B cell (primary cell): ENCODE measurements at regions of chr1 and their contacts with region 1.

Region 1: DNA sequence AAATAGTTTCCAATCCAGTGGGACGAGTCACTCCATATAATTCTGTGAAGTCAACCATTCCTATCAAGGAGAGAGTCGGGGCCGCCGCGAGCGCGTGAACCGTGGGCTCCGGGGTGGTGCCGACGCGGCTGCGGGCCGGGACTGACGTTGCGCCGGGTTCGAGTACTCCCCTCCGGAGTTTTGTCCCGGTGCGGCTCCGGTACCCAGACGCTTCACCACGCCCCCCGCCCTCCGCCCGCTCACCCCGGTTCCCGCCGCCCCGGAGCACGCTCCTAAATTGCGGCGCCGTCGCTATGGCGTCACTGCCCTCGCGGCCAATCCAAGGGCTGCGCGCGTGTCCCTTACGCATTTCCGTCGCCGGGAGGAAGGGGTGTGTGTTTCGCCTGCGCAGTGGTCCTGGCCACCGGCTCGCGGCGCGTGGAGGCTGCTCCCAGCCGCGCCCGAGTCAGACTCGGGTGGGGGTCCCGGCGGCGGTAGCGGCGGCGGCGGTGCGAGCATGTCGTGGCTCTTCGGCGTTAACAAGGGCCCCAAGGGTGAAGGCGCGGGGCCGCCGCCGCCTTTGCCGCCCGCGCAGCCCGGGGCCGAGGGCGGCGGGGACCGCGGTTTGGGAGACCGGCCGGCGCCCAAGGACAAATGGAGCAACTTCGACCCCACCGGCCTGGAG is at the start of gene ATAD3B:
- DNase-seq: peak; percentile 92
- ATAC-seq: peak; percentile 96
- H3K4me3 ChIP-seq: peak within 1 kb of the TSS; percentile 74 to 89 (median 84)
- H3K4me3 Mint-ChIP-seq: peak within 1 kb of the TSS; percentile 87
- H3K27ac ChIP-seq: peak within 1 kb of the TSS; percentile 63 to 73
- H3K27ac Mint-ChIP-seq: peak within 1 kb of the TSS; percentile 84
- H3K4me1 ChIP-seq: peaks cover 13% of the 10 kb centered on the region in 2 donors
- H3K4me1 Mint-ChIP-seq: peaks cover 23% of the 10 kb centered on the region
- H3K27me3 ChIP-seq: no peaks in the 10 kb centered on the region
- H3K27me3 Mint-ChIP-seq: no peaks in the 10 kb centered on the region
- CTCF ChIP-seq: no peak
- total RNA-seq, gene ATAD3B: 51.4 and 51.5 TPM in 2 replicates

Region 2: DNA sequence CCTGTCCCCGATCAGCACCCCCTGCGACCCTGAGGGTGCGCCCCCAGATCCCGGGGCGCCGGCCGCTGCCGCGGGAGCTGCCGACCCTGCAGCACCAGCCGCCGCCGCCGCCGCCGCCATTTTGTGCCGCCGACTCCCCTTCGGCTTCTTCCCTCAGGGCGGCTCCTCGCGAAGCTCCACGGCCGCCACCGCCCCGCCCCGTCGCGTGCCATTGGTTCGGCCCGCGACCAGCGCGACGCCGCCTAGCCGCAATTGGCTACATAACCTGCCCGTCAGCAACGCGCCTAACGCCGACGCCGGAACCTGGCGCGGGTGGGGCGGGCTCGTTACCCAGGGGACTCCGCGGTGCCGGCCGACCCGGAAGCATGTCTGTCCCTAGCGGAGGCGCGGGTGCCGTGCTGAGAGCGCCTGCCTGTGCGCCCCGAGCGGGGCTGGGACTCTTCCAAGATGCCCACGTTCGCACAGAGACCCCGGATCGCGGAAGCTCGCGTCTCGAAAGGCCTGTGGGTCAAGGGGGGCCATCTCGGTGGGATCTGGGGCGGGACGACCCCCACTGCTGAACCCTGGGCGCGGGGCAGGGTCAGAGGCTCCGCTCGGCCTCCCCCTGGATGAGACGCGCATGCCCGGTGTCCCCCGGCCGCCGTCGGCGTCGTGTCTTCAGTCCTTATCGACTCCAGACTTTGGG is 72.2 kb before region 1 on chr1 and contains the start of gene CCNL2:
- CTCF ChIA-PET with region 1: no interaction called
- POLR2A ChIA-PET with region 1: no interaction called
- intact Hi-C with region 1: loop called (anchors 2 kb)
- DNase-seq: peak; percentile 99
- ATAC-seq: peak; percentile 96
- H3K4me3 ChIP-seq: peak within 1 kb of the TSS; percentile 79 to 96 (median 92)
- H3K4me3 Mint-ChIP-seq: peak within 1 kb of the TSS; percentile 94
- H3K27ac ChIP-seq: peak within 1 kb of the TSS; percentile 70 to 85
- H3K27ac Mint-ChIP-seq: peak within 1 kb of the TSS; percentile 91
- H3K4me1 ChIP-seq: peaks cover 23 to 29% of the 10 kb centered on the region in 2 donors
- H3K4me1 Mint-ChIP-seq: peaks cover 49% of the 10 kb centered on the region
- H3K27me3 ChIP-seq: no peaks in the 10 kb centered on the region
- H3K27me3 Mint-ChIP-seq: no peaks in the 10 kb centered on the region
- CTCF ChIP-seq: peak; percentile 67
- total RNA-seq, gene CCNL2: 347 and 367 TPM in 2 replicates

Region 3: DNA sequence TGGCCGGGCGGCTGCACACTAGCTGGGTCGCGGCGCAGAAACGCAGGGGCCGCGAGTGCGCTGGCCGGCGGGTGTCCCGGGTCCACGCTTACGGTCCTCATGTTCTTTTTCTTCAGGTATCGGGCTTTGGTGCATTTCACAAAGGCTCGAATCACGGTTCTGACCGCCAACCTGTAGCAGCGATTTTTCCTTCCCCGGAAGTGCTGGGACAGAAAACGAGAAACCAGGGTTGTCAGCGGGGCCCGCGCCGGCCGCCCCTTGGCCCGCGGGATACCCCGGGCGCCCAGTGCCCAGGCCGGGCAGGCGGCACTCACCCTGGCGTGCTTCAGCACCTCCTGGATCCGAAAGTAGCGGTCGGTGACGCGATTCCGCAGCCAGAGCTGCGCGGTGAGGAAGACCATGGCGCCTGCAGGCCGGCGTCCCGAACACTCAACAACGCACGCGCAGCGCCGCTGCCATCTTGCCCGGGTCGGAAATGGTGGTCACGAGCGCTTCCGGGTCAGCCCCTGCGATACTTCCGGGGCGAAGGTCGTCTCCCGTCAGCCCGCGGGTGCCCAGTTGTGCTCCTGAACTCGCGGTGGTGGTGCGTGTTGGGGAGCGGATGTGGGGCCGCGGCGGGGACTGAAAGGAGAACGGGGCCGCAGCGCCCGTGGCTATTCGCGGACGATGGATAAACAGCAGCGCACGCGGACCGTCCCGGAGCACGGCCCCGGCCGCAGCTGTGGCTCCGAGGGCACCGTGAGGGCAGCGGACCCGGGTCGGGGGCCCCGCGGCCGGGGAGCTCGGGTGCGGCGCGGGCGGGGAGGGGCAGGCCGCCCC is 64.5 kb before region 1 on chr1 and contains the start of gene MRPL20:
- CTCF ChIA-PET with region 1: no interaction called
- POLR2A ChIA-PET with region 1: no interaction called
- intact Hi-C with region 1: loop called (anchors 2 kb)
- DNase-seq: peak; percentile 96
- ATAC-seq: peak; percentile 95
- H3K4me3 ChIP-seq: peak within 1 kb of the TSS; percentile 70 to 98 (median 90)
- H3K4me3 Mint-ChIP-seq: peak within 1 kb of the TSS; percentile 90
- H3K27ac ChIP-seq: peak within 1 kb of the TSS; percentile 69 to 87
- H3K27ac Mint-ChIP-seq: peak within 1 kb of the TSS; percentile 91
- H3K4me1 ChIP-seq: peaks cover 21 to 26% of the 10 kb centered on the region in 2 donors
- H3K4me1 Mint-ChIP-seq: peaks cover 37% of the 10 kb centered on the region
- H3K27me3 ChIP-seq: no peaks in the 10 kb centered on the region
- H3K27me3 Mint-ChIP-seq: no peaks in the 10 kb centered on the region
- CTCF ChIP-seq: peak; percentile 15
- total RNA-seq, gene MRPL20: 119 and 129 TPM in 2 replicates

Region 4: GRCh38 chr1:1511533-1512285 is 40.2 kb after region 1 on chr1 and contains the start of gene ATAD3A:
- CTCF ChIA-PET with region 1: no interaction called
- POLR2A ChIA-PET with region 1: no interaction called
- intact Hi-C with region 1: loop called (anchors 1 kb)
- DNase-seq: peak; percentile 97
- ATAC-seq: peak; percentile 94
- H3K4me3 ChIP-seq: peak within 1 kb of the TSS; percentile 47 to 92 (median 87)
- H3K4me3 Mint-ChIP-seq: peak within 1 kb of the TSS; percentile 95
- H3K27ac ChIP-seq: peak within 1 kb of the TSS; percentile 90 to 94
- H3K27ac Mint-ChIP-seq: peak within 1 kb of the TSS; percentile 94
- H3K4me1 ChIP-seq: peaks cover 6 to 10% of the 10 kb centered on the region in 2 donors
- H3K4me1 Mint-ChIP-seq: peaks cover 13% of the 10 kb centered on the region
- H3K27me3 ChIP-seq: no peaks in the 10 kb centered on the region
- H3K27me3 Mint-ChIP-seq: no peaks in the 10 kb centered on the region
- CTCF ChIP-seq: no peak
- total RNA-seq, gene ATAD3A: 17.5 and 22.9 TPM in 2 replicates

Region 5: DNA sequence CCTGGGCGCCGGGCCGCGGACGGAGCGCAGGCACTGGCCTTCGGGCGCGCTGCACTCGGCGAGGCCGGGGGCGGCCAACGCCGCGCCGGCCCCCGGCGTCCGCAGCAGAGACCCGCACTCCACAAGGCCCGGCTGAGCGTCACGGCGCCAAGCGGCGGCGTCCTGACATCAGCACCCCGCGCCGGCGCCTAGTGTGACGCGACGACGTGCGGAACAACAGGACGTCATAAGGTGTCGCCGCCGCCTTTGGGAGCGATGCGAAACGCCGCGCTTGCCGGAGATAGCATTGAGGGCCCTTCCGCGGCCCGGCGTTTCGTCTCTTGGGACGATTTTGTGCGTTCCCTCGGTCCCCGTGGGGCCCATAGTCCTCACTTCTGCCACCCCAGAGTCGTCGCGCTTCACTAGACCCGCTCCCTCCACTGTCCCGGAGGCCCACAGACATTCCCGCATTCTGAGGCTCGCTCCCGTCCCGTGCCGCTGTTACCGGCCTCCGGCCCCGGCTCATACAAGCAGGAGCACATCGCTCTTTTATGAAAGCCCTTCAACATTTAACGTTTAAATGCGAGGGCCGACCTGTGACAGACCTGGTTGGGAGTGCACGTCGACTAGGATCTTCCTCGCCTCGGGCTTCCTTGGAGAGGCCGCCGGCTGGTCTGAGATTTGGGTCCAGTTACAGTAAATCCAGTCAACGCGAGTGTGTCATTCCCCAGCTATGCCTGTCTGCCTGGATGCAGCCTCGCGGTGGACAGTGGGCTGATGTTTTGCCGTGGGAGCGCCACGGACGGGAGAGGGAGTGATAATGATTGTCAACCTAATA is 103.4 kb after region 1 on chr1 and contains the start of gene SSU72:
- CTCF ChIA-PET with region 1: no interaction called
- POLR2A ChIA-PET with region 1: no interaction called
- intact Hi-C with region 1: loop called (anchors 1 kb)
- DNase-seq: peak; percentile 97
- ATAC-seq: peak; percentile 85
- H3K4me3 ChIP-seq: peak within 1 kb of the TSS; percentile 83 to 99 (median 92)
- H3K4me3 Mint-ChIP-seq: peak within 1 kb of the TSS; percentile 96
- H3K27ac ChIP-seq: peak within 1 kb of the TSS; percentile 99
- H3K27ac Mint-ChIP-seq: peak within 1 kb of the TSS; percentile 99
- H3K4me1 ChIP-seq: peaks cover 11 to 27% of the 10 kb centered on the region in 2 donors
- H3K4me1 Mint-ChIP-seq: peaks cover 30% of the 10 kb centered on the region
- H3K27me3 ChIP-seq: peaks cover 0 to 4% (median 1%) of the 10 kb centered on the region in 4 experiments
- H3K27me3 Mint-ChIP-seq: no peaks in the 10 kb centered on the region
- CTCF ChIP-seq: no peak
- total RNA-seq, gene SSU72: 111 and 112 TPM in 2 replicates